ENCODE measurements at regions of chr1 and their contacts with region 1.

Region 1: GRCh38 chr1:111592389-111593361 is 26.9 kb upstream of the RAP1A start:
- DNase-seq: peak; percentile 86 to 96
- ATAC-seq: peak; percentile 94 to 99 (median 96)
- H3K4me3 ChIP-seq: peak overlapping the region; percentile 33
- H3K27ac ChIP-seq: peak overlapping the region; percentile 87
- H3K4me1 ChIP-seq: peaks cover 25% of the 10 kb centered on the region
- H3K27me3 ChIP-seq: no peaks in the 10 kb centered on the region
- CTCF ChIP-seq: no peak

Region 2: DNA sequence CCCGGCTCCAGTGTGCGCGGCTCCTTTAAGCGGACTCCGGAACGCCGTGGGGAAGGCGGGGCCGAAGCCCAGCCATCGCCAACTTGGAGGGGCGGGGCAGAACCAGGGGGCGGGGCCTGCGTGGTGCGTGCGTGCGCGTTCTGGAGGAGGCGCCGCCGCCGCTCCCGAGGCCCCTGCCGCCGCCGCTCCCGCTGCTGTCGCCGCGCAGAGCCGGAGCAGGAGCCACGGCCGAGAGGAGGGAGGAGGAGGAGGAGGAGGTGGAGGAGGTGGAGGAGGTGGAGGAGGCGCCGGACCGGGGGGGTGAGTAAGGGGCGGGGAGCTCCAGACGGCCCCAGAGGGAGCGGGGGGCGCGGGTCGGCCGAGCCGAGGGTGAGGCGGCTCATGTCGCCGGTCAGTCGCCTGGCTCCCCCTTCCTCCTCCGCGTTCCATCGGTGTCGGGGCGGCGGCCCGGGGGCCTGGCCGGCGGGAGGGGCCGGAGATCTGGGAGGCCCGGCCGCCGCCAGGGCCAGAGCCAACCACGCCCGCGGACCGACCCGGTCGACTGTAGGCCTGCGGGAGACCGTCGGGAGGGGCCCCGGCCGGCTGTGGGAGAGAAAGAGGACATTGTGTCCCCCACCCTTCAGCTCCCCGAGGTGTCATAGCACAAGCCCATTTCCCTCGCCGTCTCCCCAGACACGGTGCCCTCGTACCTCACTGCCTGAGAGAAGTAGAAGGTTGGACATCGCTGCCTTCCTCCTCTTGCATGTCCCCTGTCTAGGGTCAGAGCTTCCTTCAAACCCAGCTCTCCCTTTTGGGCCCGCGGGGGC is 27.2 kb after region 1 on chr1 and contains the start of gene RAP1A:
- intact Hi-C with region 1: loop called in 1 of 2 experiments (anchors 1 kb)
- DNase-seq: peak; percentile 96 to 98
- ATAC-seq: peak; percentile 96 to 98 (median 97)
- H3K4me3 ChIP-seq: peak within 1 kb of the TSS; percentile 91
- H3K27ac ChIP-seq: peak within 1 kb of the TSS; percentile 97
- H3K4me1 ChIP-seq: peaks cover 44% of the 10 kb centered on the region
- H3K27me3 ChIP-seq: no peaks in the 10 kb centered on the region
- CTCF ChIP-seq: no peak
- total RNA-seq, gene RAP1A: 63.6 to 94.8 (median 73.8) TPM

Measured in psoas muscle (tissue), 8 donors.